ENCODE measurements at regions of chr20 and their contacts with region 1.

Region 1: GRCh38 chr20:62937366-62938104 is 412 bp upstream of the GID8 start:
- DNase-seq: peak; percentile 99
- ATAC-seq: peak; percentile 90
- H3K4me3 Mint-ChIP-seq: no peak overlapping the region
- H3K27ac Mint-ChIP-seq: peak overlapping the region; percentile 96
- H3K4me1 Mint-ChIP-seq: peaks cover 44% of the 10 kb centered on the region
- H3K27me3 Mint-ChIP-seq: no peaks in the 10 kb centered on the region

Region 2: DNA sequence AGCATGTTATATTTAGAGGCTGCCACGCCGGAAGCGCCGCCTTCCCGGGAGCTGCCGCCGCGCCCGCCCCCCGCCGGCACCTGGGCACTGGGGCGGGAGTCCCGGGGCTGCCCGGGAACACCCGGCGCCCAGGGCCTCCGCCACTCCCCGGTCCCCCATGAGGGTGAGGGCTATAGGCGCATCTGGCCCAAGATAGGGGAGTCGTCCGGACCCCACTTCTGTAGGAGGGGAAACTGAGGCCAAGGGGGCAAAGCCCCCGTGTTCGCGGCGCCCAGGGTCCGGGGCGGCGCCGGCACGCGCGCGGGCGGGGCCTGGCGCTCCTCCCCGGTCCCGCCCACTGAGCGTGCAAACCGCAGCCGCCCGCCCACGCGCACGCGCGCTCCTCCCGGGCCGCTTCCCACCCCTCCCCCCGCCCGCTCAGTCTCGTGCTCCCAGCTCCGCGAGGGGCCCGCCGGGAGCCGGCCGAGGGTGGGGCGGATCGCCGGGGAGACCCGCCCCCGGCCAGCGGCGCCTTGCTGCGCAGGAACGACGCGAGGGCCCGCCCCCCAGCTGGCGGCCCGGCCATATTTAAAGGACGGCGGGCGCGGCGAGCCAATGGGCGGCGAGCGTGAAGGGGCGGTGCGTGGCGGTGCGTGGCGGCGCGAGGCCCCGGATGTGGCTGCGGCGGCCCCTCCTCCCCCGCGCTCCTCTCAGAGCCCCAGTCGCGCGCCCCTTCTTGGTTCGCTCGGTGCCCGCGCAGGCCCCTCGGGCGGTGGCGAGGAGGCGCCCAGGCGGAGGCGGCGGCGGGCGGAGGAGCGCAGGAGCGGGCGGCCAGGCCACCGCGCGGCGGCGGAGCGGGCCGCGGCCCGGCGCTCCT is 815.5 kb before region 1 on chr20 and contains the start of gene LSM14B:
- CTCF ChIA-PET with region 1: no interaction called
- POLR2A ChIA-PET with region 1: no interaction called
- intact Hi-C with region 1: loop called in 1 of 2 experiments (anchors 5 kb)
- DNase-seq: peak; percentile 99
- ATAC-seq: peak; percentile 84
- H3K4me3 Mint-ChIP-seq: peak within 1 kb of the TSS; percentile 80
- H3K27ac Mint-ChIP-seq: peak within 1 kb of the TSS; percentile 91
- H3K4me1 Mint-ChIP-seq: peaks cover 54% of the 10 kb centered on the region
- H3K27me3 Mint-ChIP-seq: no peaks in the 10 kb centered on the region
- total RNA-seq, gene LSM14B: 38.7 TPM

Region 3: DNA sequence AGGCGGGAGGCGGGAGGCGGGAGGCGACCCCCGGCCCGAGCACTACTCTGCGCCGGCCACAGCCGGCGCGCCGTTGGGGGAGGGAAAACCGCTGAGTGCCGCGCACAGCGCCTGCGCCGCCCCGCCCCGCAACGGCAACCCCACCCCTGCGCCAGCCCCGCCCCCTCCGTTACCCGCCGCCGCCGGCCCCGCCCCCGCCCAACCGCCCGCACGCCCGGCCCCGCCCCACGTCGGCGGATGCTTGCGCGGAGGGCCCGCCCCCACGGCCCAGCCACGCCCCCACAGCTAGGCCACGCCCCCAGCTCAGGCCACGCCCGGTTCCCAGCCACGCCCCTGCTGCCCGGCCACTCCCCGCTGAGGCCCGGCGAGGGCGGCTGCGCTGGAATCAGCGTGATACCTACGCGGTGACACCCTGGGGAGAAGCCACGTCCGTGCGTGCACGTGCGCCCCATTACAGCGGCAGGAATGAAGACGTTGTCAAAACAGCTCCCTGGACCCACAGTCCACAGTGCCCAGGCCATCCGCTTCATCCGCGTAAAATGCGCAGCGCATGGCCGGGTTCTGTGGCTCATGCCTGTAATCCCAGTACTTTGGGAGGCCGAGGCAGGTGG is 75.7 kb before region 1 on chr20 and contains the start of gene TCFL5:
- CTCF ChIA-PET with region 1: interaction called, 3 read pairs
- POLR2A ChIA-PET with region 1: interaction called, 4 read pairs
- intact Hi-C with region 1: loop called in 1 of 2 experiments (anchors 1 kb)
- DNase-seq: peak; percentile 97
- ATAC-seq: peak; percentile 92
- H3K4me3 Mint-ChIP-seq: peak within 1 kb of the TSS; percentile 66
- H3K27ac Mint-ChIP-seq: peak within 1 kb of the TSS; percentile 42
- H3K4me1 Mint-ChIP-seq: peaks cover 28% of the 10 kb centered on the region
- H3K27me3 Mint-ChIP-seq: no peaks in the 10 kb centered on the region
- total RNA-seq, gene TCFL5: 5.2 to 6.6 TPM

Region 4: DNA sequence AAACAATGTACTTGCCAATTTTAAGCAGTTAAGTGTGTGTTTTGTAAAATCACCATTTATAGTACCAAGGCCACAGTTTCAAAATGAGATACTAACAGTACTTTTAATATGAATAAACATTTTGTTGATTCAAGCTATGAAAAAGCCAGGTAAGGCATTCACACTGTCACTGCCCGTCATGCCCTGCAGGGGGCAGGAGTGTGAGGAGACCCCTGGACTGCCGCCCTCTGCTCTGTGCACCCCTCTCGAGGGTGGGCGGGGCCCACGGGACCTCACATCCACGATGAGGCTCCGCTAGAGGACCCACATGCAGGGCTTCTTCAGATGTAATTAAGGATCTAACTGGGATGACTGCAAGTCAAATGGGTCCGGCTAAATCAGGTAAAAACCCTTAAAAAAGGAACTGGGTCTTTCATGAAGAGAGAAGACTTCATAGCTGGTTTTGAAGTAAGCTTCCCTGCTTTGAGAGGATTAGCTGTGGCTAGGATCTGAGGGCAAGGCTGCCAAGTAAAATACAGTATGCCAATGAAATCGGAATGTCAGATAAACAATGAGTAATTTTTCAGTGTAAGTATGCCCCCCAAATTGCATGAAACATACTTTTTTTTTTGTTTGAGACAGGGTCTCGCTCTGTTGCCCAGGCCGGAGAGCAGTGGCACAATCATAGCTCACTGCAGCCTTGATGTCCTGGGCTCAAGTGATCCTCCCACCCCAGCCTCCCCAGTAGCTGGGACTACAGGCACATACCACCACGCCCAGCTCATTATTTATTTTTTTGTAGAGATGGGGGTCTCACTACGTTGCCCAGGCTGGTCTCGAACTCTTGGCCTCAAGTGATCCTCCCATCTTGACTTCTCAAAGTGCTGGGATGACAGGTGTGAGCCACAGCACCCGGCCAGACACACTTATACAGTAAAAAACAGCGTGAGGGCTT is 29.9 kb before region 1 on chr20:
- CTCF ChIA-PET with region 1: interaction called, 12 read pairs
- POLR2A ChIA-PET with region 1: interaction called, 3 read pairs
- intact Hi-C with region 1: no loop called
- DNase-seq: peak; percentile 62
- ATAC-seq: peak; percentile 76
- H3K4me3 Mint-ChIP-seq: no peak overlapping the region
- H3K27ac Mint-ChIP-seq: peak overlapping the region; percentile 58
- H3K4me1 Mint-ChIP-seq: peaks cover 11% of the 10 kb centered on the region
- H3K27me3 Mint-ChIP-seq: no peaks in the 10 kb centered on the region

Region 5: DNA sequence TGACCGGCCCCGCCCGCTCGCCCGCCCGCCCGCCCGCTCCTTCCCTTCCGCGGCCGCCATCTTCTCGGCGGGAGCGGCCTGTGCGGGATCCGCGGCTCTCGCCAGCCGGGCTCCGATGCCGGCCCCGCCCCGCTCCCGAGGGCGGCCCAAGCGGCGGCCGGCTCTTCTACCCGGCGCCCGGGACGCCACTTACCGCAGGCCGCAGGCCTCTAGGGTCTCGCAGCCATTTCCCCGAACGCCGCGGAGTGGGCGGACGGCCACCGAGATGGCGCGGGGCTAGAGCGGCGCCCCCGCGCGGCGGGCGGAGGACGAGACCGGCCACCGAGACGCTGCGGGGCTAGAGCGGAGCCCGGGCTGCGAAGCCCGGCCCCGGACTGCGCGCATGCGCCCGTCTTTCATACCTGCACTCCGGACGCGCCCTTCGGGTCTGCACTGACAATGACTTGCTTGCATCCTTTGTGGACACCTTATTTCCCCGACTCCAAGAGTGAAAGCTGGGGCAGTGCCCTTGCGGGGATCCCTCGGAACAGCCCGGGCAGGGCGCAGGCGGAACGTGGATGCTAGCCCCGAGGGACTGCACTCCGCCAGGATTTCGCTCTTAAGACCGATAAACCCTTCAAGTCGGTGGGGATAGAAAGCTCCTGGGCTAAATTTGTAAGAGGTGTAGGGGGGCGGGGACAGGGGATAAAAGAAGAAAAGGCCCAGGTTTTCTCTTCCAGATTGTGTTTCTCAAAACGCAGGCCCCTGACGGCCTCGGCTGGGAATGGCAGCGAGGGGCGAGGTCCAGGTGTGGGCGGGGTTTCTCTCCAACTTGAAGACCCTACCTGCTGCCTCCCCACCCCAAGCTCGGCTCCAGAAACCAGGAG is 11.1 kb before region 1 on chr20 and contains the start of gene DIDO1:
- CTCF ChIA-PET with region 1: interaction called, 15 read pairs
- POLR2A ChIA-PET with region 1: interaction called, 18 read pairs
- intact Hi-C with region 1: loop called (anchors 1 kb)
- DNase-seq: peak; percentile 94
- ATAC-seq: peak; percentile 78
- H3K4me3 Mint-ChIP-seq: peak within 1 kb of the TSS; percentile 94
- H3K27ac Mint-ChIP-seq: peak within 1 kb of the TSS; percentile 96
- H3K4me1 Mint-ChIP-seq: peaks cover 64% of the 10 kb centered on the region
- H3K27me3 Mint-ChIP-seq: no peaks in the 10 kb centered on the region
- total RNA-seq, gene DIDO1: 43.7 to 49.7 TPM

Region 6: GRCh38 chr20:62977613-62978560 is 40.4 kb after region 1 on chr20:
- CTCF ChIA-PET with region 1: interaction called, 5 read pairs
- POLR2A ChIA-PET with region 1: no interaction called
- intact Hi-C with region 1: loop called in 1 of 2 experiments (anchors 1 kb)
- DNase-seq: peak; percentile 90
- ATAC-seq: peak; percentile 87
- H3K4me3 Mint-ChIP-seq: peak overlapping the region; percentile 19
- H3K27ac Mint-ChIP-seq: no peak overlapping the region
- H3K4me1 Mint-ChIP-seq: peaks cover 27% of the 10 kb centered on the region
- H3K27me3 Mint-ChIP-seq: peaks cover 50% of the 10 kb centered on the region

Region 7: DNA sequence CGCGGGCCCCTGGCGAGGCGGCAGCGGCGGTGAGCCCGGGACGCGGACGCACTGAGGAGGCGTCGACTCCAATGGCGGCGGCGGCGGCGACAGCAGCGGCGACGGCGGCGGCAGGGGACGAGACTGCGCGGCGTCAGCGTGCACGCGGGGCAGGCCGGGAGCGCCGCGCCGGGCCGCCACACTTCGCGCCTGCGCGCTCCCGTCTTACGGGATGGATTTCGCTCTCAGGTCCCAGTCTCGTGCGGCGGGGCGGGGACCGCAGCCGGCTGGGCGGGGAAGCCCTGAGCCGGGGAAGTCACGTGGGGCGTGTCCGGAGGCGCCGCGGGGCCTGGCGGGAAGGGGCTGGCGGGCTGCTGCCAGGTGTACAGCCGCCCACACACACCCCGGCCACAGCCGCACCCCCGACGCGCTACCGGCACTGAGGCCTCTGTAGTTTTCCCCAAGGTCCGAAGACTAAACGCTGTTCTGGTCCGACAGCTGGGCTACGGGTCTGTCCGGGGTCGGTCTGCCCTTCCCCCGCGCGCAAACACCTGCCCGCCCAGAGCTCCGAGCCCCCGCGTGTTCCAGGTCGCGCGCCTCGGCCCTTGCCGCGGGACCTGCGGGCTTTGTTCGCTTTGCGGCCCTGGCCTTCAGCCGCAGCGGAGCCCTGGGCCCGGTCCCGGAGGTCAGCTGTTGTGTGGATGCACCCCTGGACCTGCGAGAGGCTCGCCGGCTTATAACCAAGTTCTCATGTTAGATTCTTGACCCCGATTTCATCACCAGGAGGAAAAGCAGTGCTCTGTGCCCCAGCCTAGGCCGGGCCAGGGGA is 278.7 kb after region 1 on chr20 and contains the start of gene YTHDF1:
- CTCF ChIA-PET with region 1: no interaction called
- POLR2A ChIA-PET with region 1: no interaction called
- intact Hi-C with region 1: loop called in 1 of 2 experiments (anchors 1 kb)
- DNase-seq: peak; percentile 98
- ATAC-seq: peak; percentile 98
- H3K4me3 Mint-ChIP-seq: peak within 1 kb of the TSS; percentile 92
- H3K27ac Mint-ChIP-seq: peak within 1 kb of the TSS; percentile 88
- H3K4me1 Mint-ChIP-seq: peaks cover 43% of the 10 kb centered on the region
- H3K27me3 Mint-ChIP-seq: peaks cover 4% of the 10 kb centered on the region
- total RNA-seq, gene YTHDF1: 32.2 to 32.6 TPM